ENCODE measurements at regions of chr2 and their contacts with region 1.

Region 1: GRCh38 chr2:101001691-101002561 is at the start of gene RPL31:
- ATAC-seq: peak; percentile 85 to 95 (median 92)
- H3K4me3 ChIP-seq: peak within 1 kb of the TSS; percentile 58 to 96 (median 69)
- H3K27ac ChIP-seq: peak within 1 kb of the TSS; percentile 81 to 92
- H3K4me1 ChIP-seq: peaks cover 14% of the 10 kb centered on the region in 2 donors
- total RNA-seq, gene RPL31: 1,777 to 4,126 (median 2,476) TPM

Region 2: DNA sequence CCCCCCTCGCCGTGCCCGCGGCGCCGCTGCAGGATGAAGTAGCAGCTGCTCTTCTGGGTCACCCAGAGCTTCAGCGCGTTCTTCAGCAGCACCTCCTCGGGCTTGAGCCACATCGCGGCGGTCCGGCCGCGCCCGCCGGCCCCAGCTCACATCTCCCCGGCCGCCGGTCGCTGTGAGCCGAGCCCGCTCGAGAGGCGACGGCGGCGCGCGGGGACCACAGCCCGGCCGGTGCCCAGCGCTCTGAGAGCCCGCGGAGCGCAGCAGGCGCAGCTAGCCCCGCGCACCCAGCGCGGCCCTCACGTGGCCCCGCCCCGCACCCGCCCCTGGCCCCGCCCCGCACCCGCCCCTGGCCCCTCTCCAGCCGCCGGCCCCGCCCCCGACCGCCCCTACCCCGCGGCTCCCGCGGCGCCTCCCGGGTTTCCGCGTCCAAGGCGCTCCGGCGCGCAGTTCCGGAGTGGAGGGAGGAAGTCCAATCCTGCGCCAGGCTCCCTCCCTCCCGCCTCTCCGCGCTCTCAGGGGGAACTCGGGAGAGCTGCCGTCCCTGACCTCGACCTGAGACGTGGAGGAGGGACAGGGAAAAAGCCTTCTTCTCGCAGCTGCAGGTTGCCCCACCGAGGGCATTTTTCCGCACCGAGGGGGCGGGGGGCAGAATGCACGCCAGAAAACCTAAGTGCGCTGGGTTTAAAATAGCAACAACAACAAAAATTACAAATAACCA is 149.4 kb after region 1 on chr2 and contains the start of gene TBC1D8:
- in situ Hi-C with region 1: loop called in 1 of 9 experiments (anchors 25 kb)
- ATAC-seq: peak; percentile 83 to 93 (median 88)
- H3K4me3 ChIP-seq: peak within 1 kb of the TSS; percentile 50 to 76 (median 64)
- H3K27ac ChIP-seq: peak within 1 kb of the TSS; percentile 48 to 55
- H3K4me1 ChIP-seq: peaks cover 15 to 25% of the 10 kb centered on the region in 2 donors
- total RNA-seq, gene TBC1D8: 4.7 to 14.3 (median 10.9) TPM

Region 3: GRCh38 chr2:101205521-101205998 is 203.6 kb after region 1 on chr2:
- in situ Hi-C with region 1: loop called in 1 of 9 experiments (anchors 25 kb)
- ATAC-seq: peak; percentile 78 to 100 (median 92)
- H3K4me3 ChIP-seq: no peak overlapping the region
- H3K27ac ChIP-seq: no peak overlapping the region
- H3K4me1 ChIP-seq: no peaks in the 10 kb centered on the region

Region 4: GRCh38 chr2:101252408-101253012 is 250.6 kb after region 1 on chr2 and contains the start of gene CNOT11:
- in situ Hi-C with region 1: loop called in 1 of 9 experiments (anchors 25 kb)
- ATAC-seq: peak; percentile 87 to 91 (median 90)
- H3K4me3 ChIP-seq: peak within 1 kb of the TSS; percentile 63 to 98 (median 88)
- H3K27ac ChIP-seq: peak within 1 kb of the TSS; percentile 88 to 95
- H3K4me1 ChIP-seq: peaks cover 6 to 9% of the 10 kb centered on the region in 2 donors
- total RNA-seq, gene CNOT11: 15.1 to 30.4 (median 23.5) TPM